Psoas muscle (tissue), 8 donors: ENCODE measurements at regions of chr12 and their contacts with region 1.

Region 1: DNA sequence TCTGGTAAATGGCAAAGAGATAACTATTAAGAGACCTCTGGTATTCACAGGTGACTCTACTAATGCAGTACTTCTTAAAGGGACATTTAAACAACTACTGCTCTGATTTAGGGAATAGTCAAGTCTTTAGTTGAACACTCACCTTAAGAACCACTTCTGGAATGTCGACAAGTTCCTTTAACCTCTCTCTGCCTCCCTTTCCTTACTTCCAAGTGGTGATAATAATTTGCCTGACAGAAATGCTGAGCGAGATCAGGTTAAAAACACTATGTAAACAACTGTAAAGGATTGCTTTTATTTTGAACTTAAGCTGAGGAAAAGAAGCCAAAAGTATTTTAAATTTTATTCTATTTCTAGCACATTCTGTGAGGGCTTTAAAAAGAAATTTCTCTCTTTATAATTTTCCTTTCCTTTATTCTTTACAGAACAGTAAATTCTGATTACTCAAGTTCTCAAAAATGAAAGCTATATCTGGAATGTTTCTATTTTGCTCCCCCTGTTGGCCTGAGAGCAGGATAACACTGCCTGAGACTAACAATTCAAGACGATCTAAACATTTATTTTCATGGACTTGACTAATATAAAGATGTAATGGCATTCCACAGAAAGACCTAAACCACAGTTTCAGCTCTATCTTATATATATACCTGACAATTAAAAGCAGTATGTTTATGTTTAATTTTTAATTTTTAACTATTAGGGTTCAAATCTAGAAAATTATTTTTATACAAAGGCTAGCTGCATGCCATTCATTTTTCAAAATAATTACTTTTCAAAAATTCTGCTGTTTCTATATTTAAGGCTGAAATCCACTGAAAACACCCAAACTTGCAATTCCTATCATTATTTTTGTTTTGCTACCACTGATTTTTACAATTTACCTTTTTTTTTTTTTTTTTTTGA is 29.2 kb downstream of the ZCCHC8 start:
- DNase-seq: no peak
- ATAC-seq: peak; percentile 60 to 77 (median 65)
- H3K4me3 ChIP-seq: no peak overlapping the region
- H3K27ac ChIP-seq: peak overlapping the region; percentile 68
- H3K4me1 ChIP-seq: peaks cover 6% of the 10 kb centered on the region
- H3K27me3 ChIP-seq: no peaks in the 10 kb centered on the region
- CTCF ChIP-seq: peak; percentile 82

Region 2: GRCh38 chr12:122399592-122400373 is 71.8 kb before region 1 on chr12:
- intact Hi-C with region 1: loop called in 1 of 2 experiments (anchors 1 kb)
- DNase-seq: peak; percentile 77 to 88
- ATAC-seq: peak; percentile 83 to 90 (median 85)
- H3K4me3 ChIP-seq: peak overlapping the region; percentile 71
- H3K27ac ChIP-seq: peak overlapping the region; percentile 94
- H3K4me1 ChIP-seq: peaks cover 57% of the 10 kb centered on the region
- H3K27me3 ChIP-seq: no peaks in the 10 kb centered on the region
- CTCF ChIP-seq: peak; percentile 63

Region 3: DNA sequence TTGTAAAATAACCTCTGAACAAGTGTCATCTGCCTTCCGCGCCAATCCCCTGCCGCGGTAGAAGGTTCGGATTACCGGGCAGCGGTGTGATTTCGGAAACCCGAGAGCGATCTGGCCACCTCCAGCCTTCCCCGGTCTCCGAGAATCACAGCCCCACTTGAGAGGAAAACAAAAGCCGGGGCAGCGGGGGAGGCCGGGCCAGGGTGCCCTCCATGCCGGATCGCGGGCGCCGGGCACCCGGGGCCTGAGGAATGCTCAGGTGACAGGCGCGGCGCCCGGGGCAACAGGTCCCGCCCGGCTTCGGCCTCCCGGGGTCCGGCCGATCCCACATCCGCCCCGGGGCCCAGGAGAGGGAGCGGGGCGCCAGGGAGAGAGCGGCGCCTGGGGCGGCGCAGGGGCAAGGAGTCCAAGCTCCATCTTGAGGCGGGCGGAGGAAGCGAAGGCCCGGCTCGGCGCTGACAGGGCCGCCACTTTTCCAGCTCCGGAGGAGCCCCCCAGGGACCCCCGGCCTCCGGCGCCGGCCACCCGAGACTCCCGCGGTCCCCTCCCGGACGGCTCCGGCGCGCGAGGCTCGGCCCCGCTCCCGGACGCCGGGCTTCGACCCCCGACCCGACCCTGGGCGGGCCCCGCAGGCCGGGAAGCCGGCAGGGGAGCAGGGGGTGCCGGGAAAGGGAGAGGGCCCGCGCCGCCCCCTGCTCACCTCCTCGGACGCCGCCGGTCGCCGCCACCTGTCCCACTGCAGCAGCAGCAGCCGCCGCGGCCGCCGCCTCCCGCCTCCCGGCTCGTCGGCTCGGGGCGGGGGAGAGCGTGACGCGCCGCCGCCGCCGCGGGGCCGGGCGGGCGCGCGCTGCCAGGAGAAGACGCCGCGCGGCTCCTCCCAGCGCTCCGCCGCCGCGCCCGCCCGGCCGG is 49.5 kb before region 1 on chr12 and contains the start of gene CLIP1:
- intact Hi-C with region 1: loop called in 1 of 2 experiments (anchors 2 kb)
- DNase-seq: peak; percentile 80 to 92
- ATAC-seq: peak; percentile 79 to 84 (median 82)
- H3K4me3 ChIP-seq: peak within 1 kb of the TSS; percentile 75
- H3K27ac ChIP-seq: peak within 1 kb of the TSS; percentile 97
- H3K4me1 ChIP-seq: peaks cover 34% of the 10 kb centered on the region
- H3K27me3 ChIP-seq: no peaks in the 10 kb centered on the region
- CTCF ChIP-seq: peak; percentile 47
- total RNA-seq, gene CLIP1: 458 to 639 (median 574) TPM

Region 4: GRCh38 chr12:122500685-122501488 is 29.3 kb after region 1 on chr12 and contains the start of gene ZCCHC8:
- intact Hi-C with region 1: loop called in 1 of 2 experiments (anchors 1 kb)
- DNase-seq: peak; percentile 97 to 98
- ATAC-seq: peak; percentile 93 to 96 (median 95)
- H3K4me3 ChIP-seq: peak within 1 kb of the TSS; percentile 96
- H3K27ac ChIP-seq: peak within 1 kb of the TSS; percentile 99
- H3K4me1 ChIP-seq: peaks cover 36% of the 10 kb centered on the region
- H3K27me3 ChIP-seq: no peaks in the 10 kb centered on the region
- CTCF ChIP-seq: no peak
- total RNA-seq, gene ZCCHC8: 10.9 to 22.2 (median 14.3) TPM

Region 5: GRCh38 chr12:122517877-122518276 is 46.3 kb after region 1 on chr12:
- intact Hi-C with region 1: loop called in 1 of 2 experiments (anchors 5 kb)
- DNase-seq: no peak
- ATAC-seq: peak; percentile 57 to 76 (median 70)
- H3K4me3 ChIP-seq: no peak overlapping the region
- H3K27ac ChIP-seq: peak overlapping the region; percentile 46
- H3K4me1 ChIP-seq: peaks cover 21% of the 10 kb centered on the region
- H3K27me3 ChIP-seq: no peaks in the 10 kb centered on the region
- CTCF ChIP-seq: no peak